CD8-positive, alpha-beta T cell (primary cell): ENCODE measurements at regions of chr22 and their contacts with region 1.

Region 1: GRCh38 chr22:35627264-35628041 is 10.3 kb upstream of the MB start:
- DNase-seq: peak in 8 of 9 experiments; percentile 29 to 74 (median 54)
- ATAC-seq: peak; percentile 57
- H3K4me3 ChIP-seq: peak overlapping the region; percentile 45 to 60
- H3K4me3 Mint-ChIP-seq: peak overlapping the region; percentile 69
- H3K27ac ChIP-seq: no peak overlapping the region
- H3K27ac Mint-ChIP-seq: no peak overlapping the region
- H3K4me1 ChIP-seq: peaks cover 7% of the 10 kb centered on the region
- H3K4me1 Mint-ChIP-seq: peaks cover 19% of the 10 kb centered on the region
- H3K27me3 ChIP-seq: no peaks in the 10 kb centered on the region
- H3K27me3 Mint-ChIP-seq: peaks cover 7% of the 10 kb centered on the region
- CTCF ChIP-seq: no peak

Region 2: DNA sequence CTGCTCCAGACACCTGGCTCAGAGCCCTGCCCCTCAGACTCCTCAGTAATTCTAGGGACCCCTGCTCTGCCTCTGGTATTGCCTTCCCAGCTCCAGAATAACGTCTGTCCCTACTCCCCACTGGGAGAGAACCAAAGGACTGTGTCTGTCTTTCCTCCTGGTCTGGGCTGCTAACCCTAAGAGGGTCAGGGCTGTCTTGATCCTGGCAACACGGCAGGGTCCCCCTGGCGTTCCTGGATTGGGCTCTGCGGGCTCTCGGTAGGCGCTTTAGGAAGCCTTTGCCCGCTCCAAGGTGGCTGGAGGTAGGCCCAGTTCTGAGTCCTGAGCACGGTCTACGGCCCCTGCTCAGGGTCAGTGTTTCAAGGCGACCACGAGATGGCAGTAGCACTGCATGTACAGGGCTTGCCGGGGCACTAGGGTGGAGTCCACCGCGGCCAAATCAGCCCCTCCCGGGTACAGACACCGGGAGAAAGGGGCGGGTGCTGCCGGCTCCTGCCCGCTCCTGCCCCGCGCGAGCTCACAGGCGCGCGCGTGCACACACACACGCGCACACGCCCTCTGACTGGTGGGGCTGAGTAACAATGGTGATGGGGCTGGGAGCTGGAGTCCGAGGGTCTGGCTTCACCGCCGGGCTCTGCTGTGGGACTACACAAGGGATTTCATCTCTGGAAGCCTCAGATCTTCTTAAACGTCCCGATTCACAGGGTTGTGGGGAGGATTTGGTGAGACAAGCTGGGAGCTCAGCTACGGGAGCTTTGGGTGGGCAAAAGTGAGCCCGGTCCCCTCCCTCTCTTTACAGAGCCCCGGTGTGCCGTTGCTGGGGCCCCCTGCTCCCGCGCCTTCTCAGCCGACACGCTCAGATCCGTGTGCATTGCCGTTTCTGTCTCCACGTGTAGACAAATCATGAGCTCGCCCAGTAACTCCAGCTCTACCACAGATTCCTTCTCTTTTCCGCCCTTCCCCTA is 276.6 kb before region 1 on chr22:
- CTCF ChIA-PET with region 1: interaction called, 7 read pairs
- POLR2A ChIA-PET with region 1: no interaction called
- intact Hi-C with region 1: loop called in 1 of 2 experiments (anchors 1 kb)
- DNase-seq: peak; percentile 67 to 92 (median 83)
- ATAC-seq: peak; percentile 85
- H3K4me3 ChIP-seq: peak overlapping the region; percentile 36 to 46
- H3K4me3 Mint-ChIP-seq: peak overlapping the region; percentile 79
- H3K27ac ChIP-seq: no peak overlapping the region
- H3K27ac Mint-ChIP-seq: no peak overlapping the region
- H3K4me1 ChIP-seq: peaks cover 14% of the 10 kb centered on the region
- H3K4me1 Mint-ChIP-seq: peaks cover 20% of the 10 kb centered on the region
- H3K27me3 ChIP-seq: peaks cover 0 to 5% of the 10 kb centered on the region in 2 experiments
- H3K27me3 Mint-ChIP-seq: peaks cover 11% of the 10 kb centered on the region
- CTCF ChIP-seq: peak; percentile 85

Region 3: DNA sequence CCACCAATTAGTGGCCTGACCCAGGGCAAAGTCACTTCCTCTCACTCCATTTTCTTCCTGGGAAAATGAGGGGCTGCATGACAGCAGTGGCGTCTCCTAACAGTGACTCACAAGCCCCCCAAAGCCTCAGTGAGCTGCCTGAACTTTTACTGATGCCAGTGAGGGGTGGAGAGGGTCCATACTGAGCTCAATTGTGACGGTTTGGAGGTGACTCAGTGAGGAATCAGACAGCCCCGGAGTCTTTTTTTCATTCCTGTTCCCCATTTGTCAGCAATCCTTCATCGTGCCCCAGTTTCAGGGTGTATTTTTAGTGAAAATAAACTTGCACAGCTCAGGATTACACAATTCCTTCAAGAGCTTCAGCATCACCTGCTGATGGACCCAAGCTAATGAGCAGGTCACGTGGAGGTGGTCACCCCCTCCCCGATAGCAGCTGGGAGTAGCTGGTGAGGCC is 116.9 kb before region 1 on chr22:
- CTCF ChIA-PET with region 1: no interaction called
- POLR2A ChIA-PET with region 1: no interaction called
- intact Hi-C with region 1: no loop called
- DNase-seq: no peak
- ATAC-seq: no peak
- H3K4me3 ChIP-seq: no peak overlapping the region
- H3K4me3 Mint-ChIP-seq: no peak overlapping the region
- H3K27ac ChIP-seq: no peak overlapping the region
- H3K27ac Mint-ChIP-seq: no peak overlapping the region
- H3K4me1 ChIP-seq: no peaks in the 10 kb centered on the region
- H3K4me1 Mint-ChIP-seq: no peaks in the 10 kb centered on the region
- H3K27me3 ChIP-seq: peaks cover 0 to 3% of the 10 kb centered on the region in 2 experiments
- H3K27me3 Mint-ChIP-seq: peaks cover 8% of the 10 kb centered on the region
- CTCF ChIP-seq: no peak

Region 4: GRCh38 chr22:35739076-35739930 is 111.8 kb after region 1 on chr22:
- CTCF ChIA-PET with region 1: interaction called, 4 read pairs
- POLR2A ChIA-PET with region 1: no interaction called
- intact Hi-C with region 1: loop called (anchors 1 kb)
- DNase-seq: peak in 2 of 9 experiments; percentile 20 to 35
- ATAC-seq: no peak
- H3K4me3 ChIP-seq: no peak overlapping the region
- H3K4me3 Mint-ChIP-seq: no peak overlapping the region
- H3K27ac ChIP-seq: no peak overlapping the region
- H3K27ac Mint-ChIP-seq: no peak overlapping the region
- H3K4me1 ChIP-seq: no peaks in the 10 kb centered on the region
- H3K4me1 Mint-ChIP-seq: no peaks in the 10 kb centered on the region
- H3K27me3 ChIP-seq: no peaks in the 10 kb centered on the region
- H3K27me3 Mint-ChIP-seq: peaks cover 3% of the 10 kb centered on the region
- CTCF ChIP-seq: no peak

Region 5: GRCh38 chr22:35840302-35840739 is 212.9 kb after region 1 on chr22:
- CTCF ChIA-PET with region 1: interaction called, 3 read pairs
- POLR2A ChIA-PET with region 1: no interaction called
- intact Hi-C with region 1: loop called (anchors 5 to 10 kb)
- DNase-seq: peak in 4 of 9 experiments; percentile 3 to 26 (median 14)
- ATAC-seq: no peak
- H3K4me3 ChIP-seq: no peak overlapping the region
- H3K4me3 Mint-ChIP-seq: no peak overlapping the region
- H3K27ac ChIP-seq: no peak overlapping the region
- H3K27ac Mint-ChIP-seq: no peak overlapping the region
- H3K4me1 ChIP-seq: peaks cover 5% of the 10 kb centered on the region
- H3K4me1 Mint-ChIP-seq: peaks cover 10% of the 10 kb centered on the region
- H3K27me3 ChIP-seq: no peaks in the 10 kb centered on the region
- H3K27me3 Mint-ChIP-seq: peaks cover 17% of the 10 kb centered on the region
- CTCF ChIP-seq: no peak

Region 6: DNA sequence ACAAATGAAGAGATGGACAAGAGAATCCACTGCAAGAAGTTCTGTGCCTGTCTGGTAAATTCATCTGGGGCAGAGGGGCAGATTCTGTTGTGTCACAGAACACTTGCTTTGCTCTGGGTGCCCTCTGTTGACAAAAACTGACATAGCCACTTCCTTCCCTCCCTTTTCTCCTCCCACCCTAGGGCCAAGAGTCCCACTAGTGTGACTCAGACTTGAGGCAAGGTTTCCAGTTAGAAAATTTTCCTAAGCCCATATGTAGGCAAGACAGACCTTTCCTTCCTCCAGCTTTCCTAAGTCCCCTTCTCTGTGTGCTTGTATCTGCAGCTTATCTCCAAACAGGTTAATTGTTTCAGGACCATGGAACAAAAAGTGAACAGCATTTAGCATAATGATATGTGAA is 294.3 kb after region 1 on chr22:
- CTCF ChIA-PET with region 1: interaction called, 8 read pairs
- POLR2A ChIA-PET with region 1: no interaction called
- intact Hi-C with region 1: loop called (anchors 1 kb)
- DNase-seq: peak in 7 of 9 experiments; percentile 7 to 58 (median 24)
- ATAC-seq: peak; percentile 48
- H3K4me3 ChIP-seq: no peak overlapping the region
- H3K4me3 Mint-ChIP-seq: no peak overlapping the region
- H3K27ac ChIP-seq: no peak overlapping the region
- H3K27ac Mint-ChIP-seq: no peak overlapping the region
- H3K4me1 ChIP-seq: no peaks in the 10 kb centered on the region
- H3K4me1 Mint-ChIP-seq: no peaks in the 10 kb centered on the region
- H3K27me3 ChIP-seq: no peaks in the 10 kb centered on the region
- H3K27me3 Mint-ChIP-seq: peaks cover 2% of the 10 kb centered on the region
- CTCF ChIP-seq: peak; percentile 43

Region 7: DNA sequence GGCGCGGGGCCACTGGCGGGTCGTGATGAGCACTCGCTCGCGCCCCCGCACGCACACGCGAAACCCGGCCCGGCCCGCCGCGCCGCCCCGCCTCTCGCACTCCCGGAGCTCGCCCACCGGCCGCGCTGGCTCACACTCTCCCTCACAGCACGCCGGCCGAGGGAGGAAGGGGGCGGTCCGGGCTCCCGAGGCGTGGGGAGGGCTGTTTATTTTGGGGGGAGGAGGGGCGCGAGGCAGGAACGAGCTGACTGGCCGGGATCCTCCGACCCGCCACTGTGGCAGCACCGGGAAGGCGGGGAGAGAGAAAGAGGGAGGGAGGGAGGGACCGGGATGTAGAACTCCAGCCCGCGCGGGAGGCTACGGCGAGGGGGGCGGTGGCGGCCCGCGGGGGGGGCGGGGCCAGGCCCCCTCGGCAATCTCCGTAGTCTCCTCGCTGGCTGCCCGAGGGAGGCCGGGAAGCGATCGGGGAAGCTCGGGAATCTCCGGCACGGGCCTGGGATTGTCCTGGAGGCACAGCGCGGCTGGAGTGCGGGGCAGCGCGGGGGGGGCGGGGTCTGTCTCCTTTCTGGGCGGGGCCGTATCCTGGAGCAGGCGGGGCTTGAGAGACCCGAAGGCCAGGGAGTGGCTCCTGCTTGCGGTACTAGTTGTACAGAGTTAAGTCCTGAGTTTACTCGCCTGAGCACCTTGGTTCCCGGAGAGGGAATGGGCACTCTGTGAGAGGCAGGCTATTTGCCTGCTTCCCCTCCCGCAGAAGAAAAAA is 401.4 kb after region 1 on chr22 and contains the start of gene RBFOX2:
- CTCF ChIA-PET with region 1: no interaction called
- POLR2A ChIA-PET with region 1: no interaction called
- intact Hi-C with region 1: loop called in 1 of 2 experiments (anchors 10 kb)
- DNase-seq: peak; percentile 13 to 76 (median 57)
- ATAC-seq: peak; percentile 73
- H3K4me3 ChIP-seq: peak within 1 kb of the TSS; percentile 50 to 56
- H3K4me3 Mint-ChIP-seq: peak within 1 kb of the TSS; percentile 91
- H3K27ac ChIP-seq: no peak within 1 kb of the TSS
- H3K27ac Mint-ChIP-seq: peak within 1 kb of the TSS; percentile 75
- H3K4me1 ChIP-seq: peaks cover 13% of the 10 kb centered on the region
- H3K4me1 Mint-ChIP-seq: peaks cover 22% of the 10 kb centered on the region
- H3K27me3 ChIP-seq: peaks cover 0 to 7% of the 10 kb centered on the region in 2 experiments
- H3K27me3 Mint-ChIP-seq: peaks cover 8% of the 10 kb centered on the region
- CTCF ChIP-seq: no peak
- total RNA-seq, gene RBFOX2: 0.79 to 0.94 TPM